PC-9 (cell line): ENCODE measurements at regions of chr9 and their contacts with region 1.

Region 1: DNA sequence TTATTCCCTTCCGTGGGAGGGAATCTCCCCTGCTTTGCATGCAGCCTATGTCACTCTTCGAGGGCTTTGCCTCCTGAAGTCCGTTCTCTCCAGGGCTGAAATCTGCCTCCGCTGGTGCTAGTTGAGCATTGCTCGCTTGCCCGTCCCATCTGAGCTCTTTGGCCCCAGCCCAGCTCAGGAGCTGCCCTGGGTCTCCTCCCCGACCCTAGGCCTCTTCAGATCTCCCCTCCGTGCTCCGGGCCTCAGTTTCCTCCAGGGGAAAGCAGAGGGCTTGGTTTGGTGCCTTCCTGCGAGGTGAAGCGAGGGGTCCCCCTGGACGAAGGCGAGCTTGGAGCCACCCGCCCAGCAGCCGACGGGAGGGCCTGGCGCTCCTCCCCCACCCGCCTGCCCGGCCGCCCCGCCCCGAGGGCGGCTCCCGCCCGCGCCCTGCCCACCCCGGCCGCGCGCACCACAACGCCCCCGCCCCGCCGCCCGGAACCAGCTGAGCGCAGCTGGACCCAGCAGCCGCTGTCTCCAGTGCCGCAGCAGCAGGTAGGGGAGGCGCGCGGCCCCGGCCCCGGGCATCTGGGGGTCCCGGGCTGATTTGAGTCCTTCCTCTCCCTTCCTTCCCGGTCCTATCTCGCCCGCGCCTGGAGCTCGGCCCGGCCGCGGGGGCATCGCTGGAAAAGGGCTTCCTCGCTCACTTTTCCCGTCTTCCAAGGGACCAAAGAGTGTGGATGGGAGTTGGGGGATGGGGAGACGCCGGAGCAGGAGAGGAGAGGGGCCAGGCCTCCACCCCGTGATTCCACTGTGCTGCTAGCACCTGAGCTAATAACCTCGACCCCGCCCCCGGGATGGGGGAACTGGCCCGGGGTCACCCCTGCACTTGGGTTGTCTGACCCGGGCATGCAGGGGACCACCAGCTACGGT is at the start of gene GSN:
- DNase-seq: peak; percentile 34 to 74
- H3K4me3 ChIP-seq: peak within 1 kb of the TSS; percentile 93
- H3K27ac ChIP-seq: no peak within 1 kb of the TSS
- H3K4me1 ChIP-seq: peaks cover 23% of the 10 kb centered on the region
- H3K27me3 ChIP-seq: no peaks in the 10 kb centered on the region
- CTCF ChIP-seq: no peak
- total RNA-seq, gene GSN: 135 and 207 TPM in 2 replicates

Region 2: GRCh38 chr9:120197605-120198004 is 1070.3 kb before region 1 on chr9:
- CTCF ChIA-PET with region 1: no interaction called
- POLR2A ChIA-PET with region 1: no interaction called
- intact Hi-C with region 1: no loop called
- DNase-seq: no peak
- H3K4me3 ChIP-seq: no peak overlapping the region
- H3K27ac ChIP-seq: no peak overlapping the region
- H3K4me1 ChIP-seq: no peaks in the 10 kb centered on the region
- H3K27me3 ChIP-seq: peaks cover 31% of the 10 kb centered on the region
- CTCF ChIP-seq: no peak

Region 3: GRCh38 chr9:121226186-121226585 is 41.8 kb before region 1 on chr9:
- CTCF ChIA-PET with region 1: interaction called, 4 read pairs
- POLR2A ChIA-PET with region 1: no interaction called
- intact Hi-C with region 1: loop called (anchors 2 kb)
- DNase-seq: peak; percentile 42 to 73
- H3K4me3 ChIP-seq: no peak overlapping the region
- H3K27ac ChIP-seq: peak overlapping the region; percentile 17
- H3K4me1 ChIP-seq: peaks cover 20% of the 10 kb centered on the region
- H3K27me3 ChIP-seq: no peaks in the 10 kb centered on the region
- CTCF ChIP-seq: no peak